Activated naive CD4-positive, alpha-beta T cell treated with anti-CD3 and anti-CD28 coated beads for 36 hours (primary cell): ENCODE measurements at regions of chr19 and their contacts with region 1.

Region 1: GRCh38 chr19:6516659-6517291 is 14.1 kb upstream of the TNFSF9 start:
- DNase-seq: peak; percentile 96
- H3K4me3 Mint-ChIP-seq: peak overlapping the region; percentile 89
- H3K27ac Mint-ChIP-seq: peak overlapping the region; percentile 80
- H3K4me1 Mint-ChIP-seq: peaks cover 27% of the 10 kb centered on the region
- H3K27me3 Mint-ChIP-seq: no peaks in the 10 kb centered on the region

Region 2: GRCh38 chr19:6092329-6093286 is 424.2 kb before region 1 on chr19:
- CTCF ChIA-PET with region 1: no interaction called
- intact Hi-C with region 1: no loop called
- DNase-seq: no peak
- H3K4me3 Mint-ChIP-seq: no peak overlapping the region
- H3K27ac Mint-ChIP-seq: no peak overlapping the region
- H3K4me1 Mint-ChIP-seq: peaks cover 4% of the 10 kb centered on the region
- H3K27me3 Mint-ChIP-seq: no peaks in the 10 kb centered on the region

Region 3: GRCh38 chr19:6530386-6531161 is 13.8 kb after region 1 on chr19 and contains the start of gene TNFSF9:
- CTCF ChIA-PET with region 1: interaction called, 4 read pairs
- intact Hi-C with region 1: loop called (anchors 2 kb)
- DNase-seq: peak; percentile 88
- H3K4me3 Mint-ChIP-seq: peak within 1 kb of the TSS; percentile 82
- H3K27ac Mint-ChIP-seq: peak within 1 kb of the TSS; percentile 7
- H3K4me1 Mint-ChIP-seq: peaks cover 26% of the 10 kb centered on the region
- H3K27me3 Mint-ChIP-seq: peaks cover 32% of the 10 kb centered on the region
- total RNA-seq, gene TNFSF9: 1.3 to 1.5 TPM

Region 4: DNA sequence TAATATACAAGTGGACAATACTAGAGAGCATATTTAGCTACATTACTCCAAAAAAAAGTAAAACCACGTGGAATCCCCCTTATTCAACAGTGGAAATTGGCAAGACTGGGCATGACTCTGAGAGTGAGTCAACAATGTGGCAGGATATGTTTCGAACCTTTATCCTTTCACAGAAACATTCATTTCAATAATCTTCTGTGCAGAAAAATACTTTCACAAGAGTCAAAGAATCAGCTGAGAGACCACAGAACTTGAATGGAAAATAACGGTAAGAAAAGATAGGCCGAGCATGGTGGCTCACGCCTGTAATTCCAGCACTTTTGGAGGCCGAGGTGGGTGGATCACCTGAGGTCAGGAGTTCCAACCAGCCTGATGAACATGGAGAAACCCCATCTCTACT is 99.2 kb after region 1 on chr19:
- CTCF ChIA-PET with region 1: interaction called, 3 read pairs
- intact Hi-C with region 1: loop called (anchors 5 kb)
- DNase-seq: peak; percentile 32
- H3K4me3 Mint-ChIP-seq: no peak overlapping the region
- H3K27ac Mint-ChIP-seq: no peak overlapping the region
- H3K4me1 Mint-ChIP-seq: peaks cover 15% of the 10 kb centered on the region
- H3K27me3 Mint-ChIP-seq: peaks cover 19% of the 10 kb centered on the region

Region 5: DNA sequence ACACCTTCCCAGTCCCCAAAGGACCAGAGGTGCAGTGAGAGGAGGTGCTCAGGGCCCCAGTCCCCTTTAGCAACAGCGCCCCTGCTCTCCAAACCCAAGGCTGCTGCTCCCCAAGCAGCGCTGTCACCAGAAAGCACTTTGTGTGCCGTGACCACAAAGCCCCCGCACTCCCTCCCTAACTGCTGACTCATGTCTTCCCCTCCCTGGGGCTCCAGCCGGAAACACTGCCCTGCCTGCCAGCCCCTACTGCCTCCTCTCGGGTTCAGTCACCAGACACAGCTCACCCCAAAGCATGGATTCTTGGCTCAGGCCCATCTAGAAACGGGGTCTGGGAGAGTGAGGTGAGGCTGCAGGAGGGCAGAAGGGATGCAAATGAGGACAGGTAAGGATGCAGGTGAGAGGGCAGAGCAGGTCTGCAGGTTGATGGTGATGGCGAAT is 158.1 kb after region 1 on chr19:
- CTCF ChIA-PET with region 1: no interaction called
- intact Hi-C with region 1: loop called (anchors 1 kb)
- DNase-seq: peak; percentile 97
- H3K4me3 Mint-ChIP-seq: peak overlapping the region; percentile 34
- H3K27ac Mint-ChIP-seq: peak overlapping the region; percentile 77
- H3K4me1 Mint-ChIP-seq: peaks cover 78% of the 10 kb centered on the region
- H3K27me3 Mint-ChIP-seq: no peaks in the 10 kb centered on the region

Region 6: DNA sequence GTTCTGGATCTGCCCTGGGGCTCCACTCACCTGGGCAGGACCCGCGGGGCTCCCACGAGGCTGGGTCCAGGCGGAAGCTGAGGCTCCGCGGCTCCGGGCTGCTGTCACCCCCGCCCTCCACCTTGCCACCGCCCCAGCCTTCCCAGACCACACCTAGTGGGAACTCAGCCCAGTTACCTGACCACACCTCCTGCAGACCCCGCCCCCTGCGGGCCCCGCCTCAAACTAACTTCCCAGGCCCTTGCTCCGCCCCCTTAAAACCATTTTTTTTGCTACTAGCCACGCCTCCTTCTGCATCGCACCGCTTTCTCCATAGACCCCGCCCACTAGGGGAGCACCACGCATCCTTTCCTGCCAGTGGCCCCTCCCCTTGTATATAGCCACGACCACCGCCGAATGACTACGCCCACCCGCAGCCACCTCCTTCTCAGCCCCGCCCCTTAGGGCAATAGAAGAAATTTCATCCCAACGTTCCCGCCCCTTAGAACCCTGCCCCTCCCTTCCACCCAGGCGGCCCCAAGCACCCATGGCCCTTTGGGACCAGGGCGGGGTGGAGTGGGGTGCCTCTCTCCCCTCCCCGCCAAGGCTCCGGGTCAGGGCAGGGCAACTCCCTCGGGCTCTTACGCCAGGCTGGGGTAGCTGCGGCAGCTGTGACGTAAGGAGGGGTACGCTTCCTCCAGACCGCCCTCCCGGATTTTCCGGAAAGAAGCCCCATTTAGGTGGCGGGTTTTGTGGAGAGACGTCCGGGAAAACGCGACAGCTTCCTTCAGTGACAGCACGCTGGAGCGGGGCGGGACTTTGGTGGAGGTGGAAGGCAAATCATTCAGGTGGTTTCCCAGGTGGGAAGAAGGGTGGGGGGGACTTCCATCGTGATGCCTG is 250.8 kb after region 1 on chr19 and contains the start of gene SH2D3A:
- CTCF ChIA-PET with region 1: interaction called, 4 read pairs
- intact Hi-C with region 1: loop called (anchors 1 kb)
- DNase-seq: peak; percentile 98
- H3K4me3 Mint-ChIP-seq: peak within 1 kb of the TSS; percentile 94
- H3K27ac Mint-ChIP-seq: peak within 1 kb of the TSS; percentile 91
- H3K4me1 Mint-ChIP-seq: peaks cover 39% of the 10 kb centered on the region
- H3K27me3 Mint-ChIP-seq: no peaks in the 10 kb centered on the region
- total RNA-seq, gene SH2D3A: 23.2 to 24.9 TPM